HEK293 (cell line): ENCODE measurements at regions of chr1 and their contacts with region 1.

Region 1: GRCh38 chr1:193806079-193807048 is 620.0 kb upstream of the B3GALT2 start:
- H3K4me3 ChIP-seq: no peak overlapping the region
- H3K27ac ChIP-seq: no peak overlapping the region
- H3K4me1 ChIP-seq: no peaks in the 10 kb centered on the region
- CTCF ChIP-seq: no peak

Region 2: DNA sequence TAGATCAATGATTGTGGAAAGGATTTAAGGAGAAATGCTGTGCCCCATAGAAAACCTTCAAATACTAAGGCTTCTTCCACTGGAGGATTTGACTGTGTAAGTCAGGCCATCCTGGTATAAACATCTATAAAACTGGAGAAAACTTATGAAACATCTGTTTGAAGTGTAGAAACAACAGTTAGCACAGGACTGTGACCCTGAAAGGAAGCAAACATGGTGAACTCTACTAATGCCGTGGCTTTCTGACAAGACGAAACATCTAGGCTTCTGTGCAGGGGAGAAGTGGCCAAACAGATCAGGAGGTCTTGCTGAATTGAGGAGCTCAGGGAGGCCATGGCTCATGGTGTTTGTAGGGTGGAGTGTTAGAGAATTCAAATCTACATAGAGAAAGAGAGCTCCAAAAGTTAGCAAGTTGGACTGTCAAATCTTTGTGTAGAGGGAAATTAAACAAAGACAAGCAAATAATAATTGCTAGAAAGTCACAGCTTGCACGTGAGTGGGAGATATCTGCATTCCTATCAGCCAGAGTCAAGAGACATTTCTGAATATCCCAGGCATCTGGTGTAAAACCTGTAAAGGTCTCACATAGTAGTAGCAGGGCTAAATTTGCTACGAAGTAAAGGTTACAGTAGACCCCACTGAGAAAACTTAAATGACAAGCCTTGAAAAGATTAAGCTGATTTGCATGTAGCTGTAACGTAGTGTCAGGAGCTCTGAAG is 53.2 kb before region 1 on chr1:
- CTCF ChIA-PET with region 1: interaction called, 10 read pairs
- POLR2A ChIA-PET with region 1: no interaction called
- H3K4me3 ChIP-seq: no peak overlapping the region
- H3K27ac ChIP-seq: no peak overlapping the region
- H3K4me1 ChIP-seq: no peaks in the 10 kb centered on the region
- CTCF ChIP-seq: no peak